ENCODE measurements at regions of chr21 and their contacts with region 1.

Region 1: DNA sequence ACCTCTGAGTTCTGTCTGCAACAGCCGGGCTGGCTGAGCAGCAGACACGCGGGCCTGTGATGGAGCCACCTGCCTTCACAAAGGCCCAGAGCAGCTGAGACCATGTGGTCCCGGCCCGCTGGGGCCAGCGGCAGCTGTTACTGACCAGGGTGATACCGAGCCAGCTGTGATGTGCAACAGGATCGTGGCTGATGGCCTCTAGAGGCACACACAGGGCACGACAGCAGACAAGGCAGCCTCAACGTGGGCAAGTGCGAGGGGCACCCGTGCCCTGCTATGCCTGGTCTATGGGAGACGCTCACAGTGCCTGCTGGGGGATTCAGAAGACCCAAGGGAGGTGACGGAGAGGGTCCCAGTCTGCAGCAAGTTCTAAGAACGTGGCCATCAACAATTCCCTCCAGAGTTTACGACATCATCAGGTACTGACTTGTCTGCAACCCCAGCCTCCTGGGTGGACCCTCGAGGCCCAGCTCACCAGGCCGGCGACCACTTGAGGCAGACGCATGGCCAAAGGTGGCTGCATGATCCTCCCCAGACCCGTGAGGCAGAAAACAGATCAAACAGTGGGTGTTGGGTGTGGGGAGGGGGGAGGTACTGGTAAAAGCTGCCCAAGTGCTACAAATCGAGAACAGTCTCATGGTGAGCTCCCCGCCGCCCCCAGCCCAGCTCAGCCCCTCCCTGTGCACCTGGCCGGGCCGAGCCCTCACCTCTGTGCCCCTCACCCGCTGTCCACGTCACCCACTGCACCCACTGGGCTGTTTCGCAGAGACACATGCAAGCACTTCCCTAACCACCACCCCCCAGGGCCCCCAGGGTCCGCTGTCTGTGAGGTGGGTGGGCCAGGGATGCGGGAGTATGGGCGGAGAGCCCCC is 6.0 kb downstream of the POFUT2 start:
- DNase-seq: peak; percentile 6
- H3K4me3 ChIP-seq: no peak overlapping the region
- H3K27ac ChIP-seq: no peak overlapping the region
- H3K4me1 ChIP-seq: peaks cover 1 to 5% (median 3%) of the 10 kb centered on the region in 4 donors
- H3K27me3 ChIP-seq: no peaks in the 10 kb centered on the region
- CTCF ChIP-seq: no peak
- EP300 ChIP-seq: no peak
- POLR2A ChIP-seq: no peak

Region 2: DNA sequence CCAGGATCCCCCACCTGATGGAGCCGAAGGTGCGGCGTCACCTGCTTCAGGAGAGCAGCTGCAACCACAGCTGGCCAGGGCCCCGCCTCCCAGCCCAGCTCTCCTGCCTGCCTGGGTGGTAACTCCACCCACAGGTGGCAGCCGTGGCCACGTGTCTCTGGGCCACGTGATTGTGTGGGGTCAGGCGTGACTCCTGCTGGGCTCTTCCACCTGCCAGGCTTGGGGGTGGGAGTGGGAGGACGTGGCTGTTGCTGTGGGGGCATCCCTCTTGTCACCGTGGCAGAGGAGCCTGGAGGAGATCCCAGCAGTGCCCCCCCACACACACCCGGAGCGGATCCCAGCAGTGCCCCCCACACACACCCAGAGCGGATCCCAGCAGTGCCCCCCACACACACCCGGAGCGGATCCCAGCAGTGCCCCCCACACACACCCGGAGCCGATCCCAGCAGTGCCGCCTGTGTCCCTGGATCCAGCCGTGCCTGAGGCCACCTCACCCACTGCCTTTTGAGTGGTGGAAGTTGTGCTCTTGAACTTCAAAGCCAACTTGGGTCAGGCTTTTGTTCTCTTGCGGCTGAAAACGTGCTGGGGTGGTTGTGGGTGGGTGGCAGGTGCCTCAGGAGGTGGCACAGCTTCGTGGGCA is 26.1 kb before region 1 on chr21:
- in situ Hi-C with region 1: no loop called
- intact Hi-C with region 1: loop called (anchors 2 kb)
- DNase-seq: peak; percentile 60
- H3K4me3 ChIP-seq: no peak overlapping the region
- H3K27ac ChIP-seq: no peak overlapping the region
- H3K4me1 ChIP-seq: no peaks in the 10 kb centered on the region
- H3K27me3 ChIP-seq: peaks cover 35% of the 10 kb centered on the region
- CTCF ChIP-seq: no peak
- EP300 ChIP-seq: no peak
- POLR2A ChIP-seq: no peak

Region 3: GRCh38 chr21:45292399-45293219 is 11.0 kb after region 1 on chr21:
- in situ Hi-C with region 1: no loop called
- intact Hi-C with region 1: no loop called
- DNase-seq: peak; percentile 83
- H3K4me3 ChIP-seq: no peak overlapping the region
- H3K27ac ChIP-seq: peak overlapping the region; percentile 88 to 95 (median 92)
- H3K4me1 ChIP-seq: peaks cover 33 to 44% (median 40%) of the 10 kb centered on the region in 4 donors
- H3K27me3 ChIP-seq: no peaks in the 10 kb centered on the region
- CTCF ChIP-seq: peak; percentile 91 to 96 (median 94)
- EP300 ChIP-seq: no peak
- POLR2A ChIP-seq: no peak

Region 4: DNA sequence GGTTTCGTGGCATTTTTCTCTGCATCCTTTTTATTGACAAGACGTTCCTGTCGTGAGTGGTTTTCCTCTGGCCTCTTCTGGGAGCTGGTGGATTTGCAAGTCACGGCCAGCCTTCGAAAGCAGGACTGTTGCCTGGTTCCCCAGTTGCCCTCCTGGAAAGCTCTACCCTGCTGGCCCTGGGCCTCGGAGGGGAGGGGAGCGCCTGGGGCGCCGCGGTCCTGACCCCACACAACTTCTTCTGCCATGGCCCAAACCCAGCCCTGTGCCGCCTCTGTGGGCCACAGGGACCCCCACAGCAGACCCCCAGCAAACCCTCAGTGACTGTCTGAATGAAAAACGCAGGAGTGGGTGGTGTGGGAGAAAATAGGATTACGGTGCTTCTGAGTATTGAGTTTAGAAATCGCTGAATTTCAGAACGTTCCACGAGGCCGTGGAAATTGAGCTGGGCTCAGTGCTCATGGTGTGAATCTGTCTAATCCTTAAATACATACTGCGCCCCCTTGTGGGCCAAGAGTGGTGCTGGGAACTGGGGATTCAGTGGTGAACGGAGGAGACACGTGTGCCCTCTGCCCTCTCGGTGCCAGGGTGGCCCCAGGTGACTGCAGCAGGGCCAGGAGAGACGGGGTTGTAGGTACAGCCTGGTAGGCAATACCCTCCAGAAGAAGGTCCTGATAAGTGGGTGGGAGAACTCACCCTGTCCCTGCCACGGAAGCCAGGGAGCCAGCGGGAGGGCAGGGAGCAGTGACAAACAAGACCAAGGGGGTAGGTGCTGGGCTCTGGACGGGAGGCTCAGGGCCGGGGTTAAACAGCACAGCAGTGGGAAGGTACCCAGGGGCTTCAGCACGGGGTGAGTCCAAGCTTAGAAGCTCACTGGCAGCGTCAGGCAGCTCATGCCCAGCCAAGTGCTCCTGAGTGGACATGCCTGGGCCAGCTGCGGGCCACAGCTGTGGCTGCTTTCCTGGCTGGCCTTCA is 598.7 kb after region 1 on chr21:
- in situ Hi-C with region 1: no loop called
- intact Hi-C with region 1: no loop called
- DNase-seq: peak; percentile 64
- H3K4me3 ChIP-seq: no peak overlapping the region
- H3K27ac ChIP-seq: no peak overlapping the region
- H3K4me1 ChIP-seq: peaks cover 0 to 4% (median 0%) of the 10 kb centered on the region in 4 donors
- H3K27me3 ChIP-seq: no peaks in the 10 kb centered on the region
- CTCF ChIP-seq: peak; percentile 46 to 60 (median 56)
- EP300 ChIP-seq: no peak
- POLR2A ChIP-seq: no peak